HCT116 (cell line): ENCODE measurements at regions of chr2 and their contacts with region 1.

Region 1: GRCh38 chr2:132438691-132439090 is 22.1 kb downstream of the GPR39 start:
- DNase-seq: peak; percentile 78
- ATAC-seq: peak; percentile 78
- H3K4me3 ChIP-seq: peak overlapping the region in 1 of 2 experiments; percentile 12; a peak in 1 of 4 replicates
- H3K27ac ChIP-seq: peak overlapping the region; percentile 46; the same call in 1 of the 2 replicates
- H3K4me1 ChIP-seq: peaks cover 15 to 42% of the 10 kb centered on the region in 2 experiments
- H3K27me3 ChIP-seq: no peaks in the 10 kb centered on the region
- CTCF ChIP-seq: no peak
- POLR2A ChIP-seq: no peak
- RAD21 ChIP-seq: peak; percentile 35

Region 2: GRCh38 chr2:132416081-132416881 is 22.4 kb before region 1 on chr2 and contains the start of gene GPR39:
- CTCF ChIA-PET with region 1: interaction called, 6 read pairs
- POLR2A ChIA-PET with region 1: interaction called, 4 read pairs
- RAD21 ChIA-PET with region 1: no interaction called
- intact Hi-C with region 1: loop called (anchors 1 kb)
- DNase-seq: peak; percentile 94
- ATAC-seq: peak; percentile 91
- H3K4me3 ChIP-seq: peak within 1 kb of the TSS; percentile 46 to 66
- H3K27ac ChIP-seq: peak within 1 kb of the TSS; percentile 75
- H3K4me1 ChIP-seq: peaks cover 20 to 40% of the 10 kb centered on the region in 2 experiments
- H3K27me3 ChIP-seq: no peaks in the 10 kb centered on the region
- CTCF ChIP-seq: no peak
- POLR2A ChIP-seq: no peak
- RAD21 ChIP-seq: no peak; the same call in none of the 2 replicates
- total RNA-seq, gene GPR39: 5.1 TPM

Region 3: GRCh38 chr2:132448771-132449170 is 10.1 kb after region 1 on chr2:
- CTCF ChIA-PET with region 1: interaction called, 10 read pairs
- POLR2A ChIA-PET with region 1: interaction called, 3 read pairs
- RAD21 ChIA-PET with region 1: no interaction called
- intact Hi-C with region 1: no loop called
- DNase-seq: no peak
- ATAC-seq: peak; percentile 82
- H3K4me3 ChIP-seq: no peak overlapping the region
- H3K27ac ChIP-seq: no peak overlapping the region
- H3K4me1 ChIP-seq: peaks cover 0 to 17% of the 10 kb centered on the region in 2 experiments; a peak in 1 of 4 replicates
- H3K27me3 ChIP-seq: no peaks in the 10 kb centered on the region
- CTCF ChIP-seq: peak; percentile 66 to 83 (median 76); a peak in 5 of 6 replicates
- POLR2A ChIP-seq: no peak
- RAD21 ChIP-seq: peak; percentile 80